PC-9 (cell line): ENCODE measurements at regions of chr1 and their contacts with region 1.

Region 1: GRCh38 chr1:14733048-14733778 is 134.7 kb downstream of the KAZN start:
- DNase-seq: peak in 1 of 2 experiments; percentile 50
- H3K4me3 ChIP-seq: no peak overlapping the region
- H3K27ac ChIP-seq: no peak overlapping the region
- H3K4me1 ChIP-seq: no peaks in the 10 kb centered on the region
- H3K27me3 ChIP-seq: peaks cover 42% of the 10 kb centered on the region
- CTCF ChIP-seq: no peak

Region 2: DNA sequence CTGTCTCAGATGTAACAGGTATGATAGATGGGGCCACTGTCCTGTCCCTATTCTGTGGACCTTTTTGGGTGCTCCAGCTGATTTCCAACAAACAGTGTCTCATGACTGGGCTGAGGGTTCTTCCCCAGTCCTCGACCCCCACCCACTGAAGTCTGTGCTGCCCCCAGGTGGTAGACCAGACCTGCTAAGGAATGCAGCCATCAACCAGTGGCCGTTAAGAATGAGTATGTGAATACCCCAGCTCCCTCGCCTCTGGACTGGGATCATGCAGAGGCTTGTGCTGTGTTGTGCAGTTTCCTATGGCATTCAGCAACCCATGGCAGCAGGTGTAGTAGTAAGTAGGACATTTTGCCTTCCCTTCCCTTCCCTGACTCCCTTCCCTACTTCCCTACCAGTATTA is 317.8 kb before region 1 on chr1:
- CTCF ChIA-PET with region 1: interaction called, 15 read pairs
- POLR2A ChIA-PET with region 1: no interaction called
- intact Hi-C with region 1: no loop called
- DNase-seq: no peak
- H3K4me3 ChIP-seq: no peak overlapping the region
- H3K27ac ChIP-seq: no peak overlapping the region
- H3K4me1 ChIP-seq: no peaks in the 10 kb centered on the region
- H3K27me3 ChIP-seq: peaks cover 18% of the 10 kb centered on the region; the same call in 1 of the 2 replicates
- CTCF ChIP-seq: no peak